Caco-2 (cell line): ENCODE measurements at regions of chr2 and their contacts with region 1.

Region 1: DNA sequence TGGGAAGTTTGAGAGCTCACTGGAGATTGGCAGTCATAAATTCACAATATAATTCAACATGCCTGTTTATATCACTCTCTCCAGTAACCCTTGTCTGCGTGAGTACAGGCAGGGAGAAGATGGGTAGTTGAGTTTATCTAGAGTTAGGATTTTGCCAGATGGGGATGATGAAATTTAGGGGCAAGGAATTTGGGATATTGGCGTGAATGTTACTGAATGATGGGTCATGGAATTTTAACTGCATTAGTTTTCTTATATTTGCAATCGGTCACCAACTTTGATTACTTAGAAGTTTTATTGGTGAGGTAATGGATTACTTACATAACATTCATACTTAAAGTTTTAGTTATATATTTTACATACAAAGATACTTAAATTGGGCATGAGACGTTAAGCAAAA is 35.1 kb downstream of the SANBR start:
- DNase-seq: no peak
- H3K4me3 ChIP-seq: no peak overlapping the region
- H3K4me3 Mint-ChIP-seq: no peak overlapping the region
- H3K27ac Mint-ChIP-seq: no peak overlapping the region
- H3K4me1 ChIP-seq: no peaks in the 10 kb centered on the region
- H3K4me1 Mint-ChIP-seq: no peaks in the 10 kb centered on the region
- H3K27me3 ChIP-seq: no peaks in the 10 kb centered on the region
- H3K27me3 Mint-ChIP-seq: no peaks in the 10 kb centered on the region
- CTCF ChIP-seq: no peak

Region 2: GRCh38 chr2:61065715-61066709 is 34.8 kb before region 1 on chr2 and contains the start of gene SANBR:
- CTCF ChIA-PET with region 1: no interaction called
- POLR2A ChIA-PET with region 1: interaction called, 10 read pairs
- intact Hi-C with region 1: no loop called
- DNase-seq: peak; percentile 88 to 95
- H3K4me3 ChIP-seq: peak within 1 kb of the TSS; percentile 99
- H3K4me3 Mint-ChIP-seq: peak within 1 kb of the TSS; percentile 98
- H3K27ac Mint-ChIP-seq: peak within 1 kb of the TSS; percentile 91
- H3K4me1 ChIP-seq: peaks cover 3% of the 10 kb centered on the region; the same call in 1 of the 2 replicates
- H3K4me1 Mint-ChIP-seq: peaks cover 7% of the 10 kb centered on the region
- H3K27me3 ChIP-seq: no peaks in the 10 kb centered on the region
- H3K27me3 Mint-ChIP-seq: no peaks in the 10 kb centered on the region
- CTCF ChIP-seq: peak in 1 of 2 experiments; percentile 10
- total RNA-seq, gene SANBR: 13.3 and 14.3 TPM in 2 replicates

Region 3: GRCh38 chr2:61135510-61135909 is 34.7 kb after region 1 on chr2:
- CTCF ChIA-PET with region 1: no interaction called
- POLR2A ChIA-PET with region 1: no interaction called
- intact Hi-C with region 1: no loop called
- DNase-seq: peak in 1 of 2 experiments; percentile 16
- H3K4me3 ChIP-seq: no peak overlapping the region
- H3K4me3 Mint-ChIP-seq: no peak overlapping the region
- H3K27ac Mint-ChIP-seq: no peak overlapping the region
- H3K4me1 ChIP-seq: no peaks in the 10 kb centered on the region
- H3K4me1 Mint-ChIP-seq: no peaks in the 10 kb centered on the region
- H3K27me3 ChIP-seq: no peaks in the 10 kb centered on the region
- H3K27me3 Mint-ChIP-seq: peaks cover 3% of the 10 kb centered on the region
- CTCF ChIP-seq: no peak